Caco-2 (cell line): ENCODE measurements at regions of chr4 and their contacts with region 1.

Region 1: DNA sequence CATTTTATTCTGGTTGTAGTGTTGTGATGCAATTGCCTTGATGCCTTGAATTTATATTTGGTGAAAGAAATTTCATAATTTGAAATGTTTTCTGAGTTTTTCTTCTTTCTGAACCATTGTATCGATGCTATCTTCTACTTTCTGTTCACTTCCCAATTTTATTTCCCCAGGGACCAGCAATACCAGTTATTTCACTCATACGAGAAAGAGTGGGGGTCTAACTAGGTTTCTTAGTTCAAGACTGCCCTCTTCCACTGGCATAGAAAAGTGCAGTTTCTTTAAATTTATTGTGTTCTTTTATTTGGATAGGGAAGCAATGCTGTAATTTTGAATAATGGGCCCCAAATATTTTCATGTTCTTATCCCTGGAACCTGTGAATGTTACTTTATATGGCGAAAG is 544.0 kb upstream of the ADGRL3 start:
- DNase-seq: no peak
- H3K4me3 ChIP-seq: no peak overlapping the region
- H3K4me3 Mint-ChIP-seq: no peak overlapping the region
- H3K27ac Mint-ChIP-seq: no peak overlapping the region
- H3K4me1 ChIP-seq: no peaks in the 10 kb centered on the region
- H3K4me1 Mint-ChIP-seq: no peaks in the 10 kb centered on the region
- H3K27me3 ChIP-seq: no peaks in the 10 kb centered on the region
- H3K27me3 Mint-ChIP-seq: no peaks in the 10 kb centered on the region
- CTCF ChIP-seq: peak in 1 of 2 experiments; percentile 28

Region 2: DNA sequence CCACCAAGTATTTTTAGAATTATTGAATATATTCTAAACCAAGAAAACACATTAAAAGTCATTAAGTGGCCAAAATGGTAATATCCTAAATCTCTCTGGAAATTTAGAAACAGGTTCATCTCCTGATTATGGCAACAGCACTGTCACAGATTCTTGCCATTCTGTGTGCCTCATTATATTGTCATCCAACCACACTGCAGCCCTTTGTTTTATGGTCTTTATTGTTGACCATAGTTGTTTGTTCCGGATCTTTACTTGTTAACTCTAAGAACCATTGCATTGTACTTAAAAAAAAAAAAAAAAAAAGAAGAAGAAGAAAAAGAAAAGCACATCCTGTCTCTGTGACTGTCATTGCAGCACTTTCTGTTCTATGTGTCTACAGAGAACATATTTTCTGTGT is 278.2 kb before region 1 on chr4:
- CTCF ChIA-PET with region 1: no interaction called
- POLR2A ChIA-PET with region 1: no interaction called
- intact Hi-C with region 1: no loop called
- DNase-seq: no peak
- H3K4me3 ChIP-seq: no peak overlapping the region
- H3K4me3 Mint-ChIP-seq: no peak overlapping the region
- H3K27ac Mint-ChIP-seq: no peak overlapping the region
- H3K4me1 ChIP-seq: no peaks in the 10 kb centered on the region
- H3K4me1 Mint-ChIP-seq: no peaks in the 10 kb centered on the region
- H3K27me3 ChIP-seq: no peaks in the 10 kb centered on the region
- H3K27me3 Mint-ChIP-seq: no peaks in the 10 kb centered on the region
- CTCF ChIP-seq: no peak

Region 3: GRCh38 chr4:60485279-60485678 is 170.9 kb before region 1 on chr4:
- CTCF ChIA-PET with region 1: no interaction called
- POLR2A ChIA-PET with region 1: no interaction called
- intact Hi-C with region 1: loop called (anchors 10 kb)
- DNase-seq: no peak
- H3K4me3 ChIP-seq: no peak overlapping the region
- H3K4me3 Mint-ChIP-seq: no peak overlapping the region
- H3K27ac Mint-ChIP-seq: no peak overlapping the region
- H3K4me1 ChIP-seq: no peaks in the 10 kb centered on the region
- H3K4me1 Mint-ChIP-seq: no peaks in the 10 kb centered on the region
- H3K27me3 ChIP-seq: no peaks in the 10 kb centered on the region
- H3K27me3 Mint-ChIP-seq: no peaks in the 10 kb centered on the region
- CTCF ChIP-seq: no peak